ENCODE measurements at regions of chr4 and their contacts with region 1.

Region 1: GRCh38 chr4:3193531-3194203 is 55.3 kb upstream of the MSANTD1 start:
- DNase-seq: no peak
- ATAC-seq: no peak
- H3K4me3 ChIP-seq: no peak overlapping the region
- H3K27ac ChIP-seq: no peak overlapping the region
- H3K4me1 ChIP-seq: peaks cover 0 to 3% (median 0%) of the 10 kb centered on the region in 9 donors
- H3K27me3 ChIP-seq: no peaks in the 10 kb centered on the region
- CTCF ChIP-seq: peak in 7 of 9 donors; percentile 22 to 48 (median 42)

Region 2: DNA sequence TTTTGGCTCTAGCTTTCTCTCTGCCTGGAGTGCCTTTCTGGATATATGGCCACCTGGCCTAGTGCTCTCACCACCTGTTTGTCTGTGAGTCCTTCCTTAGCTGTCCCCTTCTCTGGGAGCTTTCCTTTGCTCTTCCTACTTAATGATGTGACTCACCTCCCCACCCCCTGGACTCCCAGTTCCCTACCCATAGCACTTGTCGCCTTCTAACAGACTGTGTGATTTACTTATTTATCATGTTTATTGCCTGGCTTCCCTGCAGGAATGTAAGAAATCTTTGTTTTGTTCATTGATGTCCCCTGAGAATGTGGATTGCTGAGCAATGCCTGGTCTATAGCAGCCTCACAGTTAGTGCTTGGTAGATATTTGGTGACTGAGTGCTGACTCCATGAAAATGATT is 331.1 kb before region 1 on chr4:
- intact Hi-C with region 1: no loop called
- DNase-seq: no peak
- ATAC-seq: peak in 1 of 8 donors; percentile 39
- H3K4me3 ChIP-seq: no peak overlapping the region
- H3K27ac ChIP-seq: peak overlapping the region; percentile 51 to 87 (median 71)
- H3K4me1 ChIP-seq: peaks cover 60 to 100% (median 98%) of the 10 kb centered on the region in 9 donors
- H3K27me3 ChIP-seq: no peaks in the 10 kb centered on the region
- CTCF ChIP-seq: no peak

Region 3: GRCh38 chr4:3330707-3331106 is 137.0 kb after region 1 on chr4:
- intact Hi-C with region 1: loop called in 1 of 10 experiments (anchors 10 kb)
- DNase-seq: no peak
- ATAC-seq: peak in 4 of 8 donors; percentile 35 to 59 (median 46)
- H3K4me3 ChIP-seq: no peak overlapping the region
- H3K27ac ChIP-seq: peak overlapping the region in 4 of 10 donors; percentile 41 to 86 (median 78)
- H3K4me1 ChIP-seq: peaks cover 0 to 51% (median 22%) of the 10 kb centered on the region in 9 donors
- H3K27me3 ChIP-seq: no peaks in the 10 kb centered on the region
- CTCF ChIP-seq: no peak

Region 4: DNA sequence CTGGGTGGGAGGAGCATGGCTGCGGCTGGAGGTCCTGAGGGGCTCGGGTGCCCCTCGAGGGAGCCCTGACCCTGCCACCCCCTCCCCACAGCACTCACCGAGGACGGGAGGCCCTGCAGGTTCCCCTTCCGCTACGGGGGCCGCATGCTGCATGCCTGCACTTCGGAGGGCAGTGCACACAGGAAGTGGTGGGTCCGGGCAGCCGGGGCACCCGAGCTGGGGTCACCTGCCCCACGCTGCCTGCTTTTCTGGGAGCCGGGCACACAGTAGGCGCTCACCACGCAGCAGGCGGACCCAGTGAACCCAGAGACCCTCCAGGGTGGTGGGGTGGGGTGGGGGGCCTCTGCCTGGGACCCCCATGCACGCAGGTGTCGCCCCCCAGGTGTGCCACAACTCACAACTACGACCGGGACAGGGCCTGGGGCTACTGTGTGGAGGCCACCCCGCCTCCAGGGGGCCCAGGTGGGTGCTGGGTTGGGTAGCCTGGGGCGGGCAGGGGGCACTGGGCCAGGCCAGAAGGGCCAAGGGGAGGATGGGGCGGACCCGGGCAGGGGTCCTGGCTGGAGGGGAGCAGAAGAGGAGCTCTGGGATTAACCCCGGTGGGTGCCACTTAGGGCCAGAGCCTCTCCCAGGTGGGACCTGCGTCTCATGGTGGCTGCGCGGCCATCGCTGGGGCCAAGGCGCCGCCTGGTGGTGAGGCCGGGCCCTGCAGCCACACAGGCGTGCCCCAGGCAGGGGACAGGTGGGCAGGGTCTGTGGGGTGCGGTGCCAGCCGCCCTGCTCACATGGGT is 249.5 kb after region 1 on chr4:
- intact Hi-C with region 1: loop called in 6 of 10 experiments (anchors 5 to 10 kb)
- DNase-seq: peak in 1 of 2 donors; percentile 54
- ATAC-seq: peak; percentile 51 to 73 (median 62)
- H3K4me3 ChIP-seq: no peak overlapping the region
- H3K27ac ChIP-seq: no peak overlapping the region
- H3K4me1 ChIP-seq: peaks cover 0 to 5% (median 0%) of the 10 kb centered on the region in 9 donors
- H3K27me3 ChIP-seq: no peaks in the 10 kb centered on the region
- CTCF ChIP-seq: peak; percentile 94 to 100 (median 99)